HepG2 (cell line): ENCODE measurements at regions of chr5 and their contacts with region 1.

Region 1: DNA sequence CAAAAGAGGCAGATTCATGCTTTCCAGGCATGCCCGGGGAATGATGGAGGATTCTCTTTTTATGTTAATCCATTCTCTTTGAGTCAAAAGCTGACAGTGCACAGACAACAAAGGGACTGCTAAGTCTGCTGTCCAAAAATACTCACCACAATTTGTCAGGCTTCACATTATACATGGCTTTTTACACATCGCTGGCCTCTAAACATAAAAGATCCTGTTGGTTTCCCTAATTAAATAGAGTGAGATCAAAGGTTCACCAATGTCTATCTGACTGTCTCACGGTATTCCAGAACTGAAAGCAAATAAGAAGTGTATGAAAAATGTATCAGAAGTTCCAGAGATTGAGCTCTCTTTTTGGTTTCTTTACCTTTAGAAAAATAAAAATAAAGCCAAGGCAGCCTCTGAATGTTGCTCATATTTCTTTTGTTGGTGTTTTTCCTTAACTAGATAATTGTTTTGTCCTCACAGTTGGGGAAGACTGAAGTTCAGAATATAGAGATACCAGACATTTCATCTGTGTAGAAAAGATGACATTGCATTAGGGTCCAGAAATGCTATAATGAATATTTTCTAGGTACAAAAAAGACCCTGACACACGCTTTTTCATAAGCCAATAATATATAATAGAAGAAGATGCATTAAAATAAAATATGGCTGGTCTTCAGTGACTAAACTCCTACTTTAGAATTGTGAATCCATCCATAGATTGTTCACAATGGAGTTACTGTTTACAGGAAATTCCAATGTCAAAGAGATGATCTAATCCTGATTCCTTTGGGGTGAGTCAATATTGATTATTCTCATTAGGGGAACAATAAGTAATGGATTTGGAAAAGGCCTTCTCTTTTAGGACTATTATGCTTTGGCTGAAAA is 688.2 kb upstream of the CDH6 start:
- DNase-seq: peak; percentile 97
- ATAC-seq: peak; percentile 96
- H3K4me3 ChIP-seq: peak overlapping the region in 2 of 3 experiments; percentile 40 to 53; a peak in 2 of 6 replicates
- H3K27ac ChIP-seq: peak overlapping the region; percentile 100
- H3K4me1 ChIP-seq: peaks cover 66% of the 10 kb centered on the region
- H3K27me3 ChIP-seq: no peaks in the 10 kb centered on the region; a peak in 1 of 5 replicates
- CTCF ChIP-seq: no peak
- EP300 ChIP-seq: peak; percentile 81 to 96; a peak in 3 of 4 replicates
- POLR2A ChIP-seq: peak in 1 of 2 experiments; percentile 46; a peak in 1 of 4 replicates
- RAD21 ChIP-seq: no peak

Region 2: DNA sequence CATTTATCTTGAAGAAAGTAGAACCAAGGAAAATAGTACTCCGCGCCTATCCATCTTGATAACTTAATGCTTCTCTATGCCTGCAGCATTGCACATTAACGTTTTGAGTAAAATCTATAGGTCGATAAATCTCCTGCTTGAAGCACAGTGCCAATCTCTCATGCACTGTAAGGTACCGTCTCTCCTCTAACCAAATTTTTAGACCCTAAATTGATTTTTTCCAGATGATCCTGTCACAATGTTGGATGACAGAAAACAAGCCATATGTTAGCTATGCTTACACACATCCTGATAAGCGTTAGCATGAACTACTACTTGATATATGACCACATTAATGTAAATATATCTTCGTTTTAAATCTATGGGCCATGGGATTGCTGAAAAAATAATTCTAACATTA is 35.6 kb before region 1 on chr5:
- CTCF ChIA-PET with region 1: no interaction called
- POLR2A ChIA-PET with region 1: no interaction called
- in situ Hi-C with region 1: no loop called
- intact Hi-C with region 1: no loop called
- DNase-seq: no peak
- ATAC-seq: no peak
- H3K4me3 ChIP-seq: no peak overlapping the region
- H3K27ac ChIP-seq: no peak overlapping the region
- H3K4me1 ChIP-seq: no peaks in the 10 kb centered on the region
- H3K27me3 ChIP-seq: no peaks in the 10 kb centered on the region
- CTCF ChIP-seq: no peak
- EP300 ChIP-seq: no peak
- POLR2A ChIP-seq: no peak
- RAD21 ChIP-seq: no peak

Region 3: GRCh38 chr5:30607301-30607700 is 102.1 kb after region 1 on chr5:
- CTCF ChIA-PET with region 1: no interaction called
- POLR2A ChIA-PET with region 1: interaction called, 10 read pairs
- in situ Hi-C with region 1: loop called (anchors 10 kb)
- intact Hi-C with region 1: loop called (anchors 1 kb)
- DNase-seq: peak; percentile 45
- ATAC-seq: peak; percentile 17; the same call in 1 of the 3 replicates
- H3K4me3 ChIP-seq: no peak overlapping the region
- H3K27ac ChIP-seq: peak overlapping the region; percentile 62
- H3K4me1 ChIP-seq: peaks cover 60% of the 10 kb centered on the region
- H3K27me3 ChIP-seq: no peaks in the 10 kb centered on the region
- CTCF ChIP-seq: no peak
- EP300 ChIP-seq: peak in 1 of 2 experiments; percentile 41; a peak in 1 of 4 replicates
- POLR2A ChIP-seq: no peak
- RAD21 ChIP-seq: no peak

Region 4: DNA sequence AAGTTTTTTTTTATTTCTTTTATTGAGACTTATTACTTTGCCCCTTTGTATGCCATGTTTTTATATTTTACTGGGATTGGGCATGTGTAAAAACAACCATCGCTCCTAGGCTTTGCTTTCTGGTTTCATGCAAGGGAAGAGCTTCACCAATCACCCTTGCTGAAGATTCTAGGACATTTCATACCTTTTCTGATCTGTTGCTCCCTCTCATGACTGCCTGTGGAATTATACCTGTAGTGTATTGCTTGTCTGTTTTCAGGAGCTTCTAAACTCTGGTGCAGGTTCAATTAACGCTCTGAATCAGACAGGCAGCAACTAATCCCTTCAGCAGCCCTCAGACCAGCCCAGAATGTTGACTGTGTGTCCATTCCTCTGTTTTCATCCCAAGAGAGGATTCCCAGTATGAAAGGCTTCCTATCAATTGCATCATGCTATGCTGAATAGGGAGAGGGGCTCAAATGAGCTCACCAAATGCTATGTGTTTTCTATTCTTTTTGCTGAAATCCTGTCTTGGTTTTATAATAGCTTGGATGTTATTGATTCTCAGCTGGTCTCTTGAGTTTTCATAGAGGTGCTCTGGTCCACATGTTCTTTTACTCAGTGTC is 115.3 kb after region 1 on chr5:
- CTCF ChIA-PET with region 1: no interaction called
- POLR2A ChIA-PET with region 1: no interaction called
- in situ Hi-C with region 1: no loop called
- intact Hi-C with region 1: loop called (anchors 1 kb)
- DNase-seq: peak; percentile 50
- ATAC-seq: peak; percentile 89
- H3K4me3 ChIP-seq: no peak overlapping the region
- H3K27ac ChIP-seq: no peak overlapping the region
- H3K4me1 ChIP-seq: peaks cover 8% of the 10 kb centered on the region; the same call in 1 of the 2 replicates
- H3K27me3 ChIP-seq: no peaks in the 10 kb centered on the region
- CTCF ChIP-seq: peak; percentile 64
- EP300 ChIP-seq: no peak
- POLR2A ChIP-seq: no peak
- RAD21 ChIP-seq: peak; percentile 64

Region 5: DNA sequence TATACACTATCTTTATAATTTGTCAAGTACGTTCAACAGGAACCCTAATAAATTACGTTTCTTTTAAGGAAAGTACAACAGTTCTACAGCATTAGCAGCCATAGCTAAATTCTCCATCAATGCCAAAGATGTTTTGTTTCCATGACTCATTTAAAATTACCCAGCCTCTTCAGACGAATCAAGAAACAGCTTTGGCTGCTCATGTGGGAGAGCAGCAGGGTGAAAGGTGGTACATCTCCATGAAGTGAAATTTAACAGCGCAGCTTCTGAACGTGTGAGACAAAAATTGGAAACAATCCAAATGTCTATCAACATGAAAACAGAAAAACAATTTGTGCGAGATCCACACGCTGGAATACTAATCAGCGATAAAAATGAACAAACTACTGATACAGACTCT is 360.9 kb after region 1 on chr5:
- CTCF ChIA-PET with region 1: no interaction called
- POLR2A ChIA-PET with region 1: no interaction called
- in situ Hi-C with region 1: no loop called
- intact Hi-C with region 1: no loop called
- DNase-seq: no peak
- ATAC-seq: no peak
- H3K4me3 ChIP-seq: no peak overlapping the region
- H3K27ac ChIP-seq: no peak overlapping the region
- H3K4me1 ChIP-seq: no peaks in the 10 kb centered on the region
- H3K27me3 ChIP-seq: no peaks in the 10 kb centered on the region
- CTCF ChIP-seq: no peak
- EP300 ChIP-seq: no peak
- POLR2A ChIP-seq: no peak
- RAD21 ChIP-seq: no peak

Region 6: GRCh38 chr5:31232273-31232888 is 727.1 kb after region 1 on chr5:
- CTCF ChIA-PET with region 1: no interaction called
- POLR2A ChIA-PET with region 1: no interaction called
- in situ Hi-C with region 1: no loop called
- intact Hi-C with region 1: loop called (anchors 1 kb)
- DNase-seq: peak; percentile 48
- ATAC-seq: peak; percentile 94
- H3K4me3 ChIP-seq: no peak overlapping the region
- H3K27ac ChIP-seq: no peak overlapping the region
- H3K4me1 ChIP-seq: no peaks in the 10 kb centered on the region
- H3K27me3 ChIP-seq: no peaks in the 10 kb centered on the region
- CTCF ChIP-seq: peak; percentile 76
- EP300 ChIP-seq: no peak
- POLR2A ChIP-seq: no peak
- RAD21 ChIP-seq: peak; percentile 57; the same call in 1 of the 2 replicates

Region 7: DNA sequence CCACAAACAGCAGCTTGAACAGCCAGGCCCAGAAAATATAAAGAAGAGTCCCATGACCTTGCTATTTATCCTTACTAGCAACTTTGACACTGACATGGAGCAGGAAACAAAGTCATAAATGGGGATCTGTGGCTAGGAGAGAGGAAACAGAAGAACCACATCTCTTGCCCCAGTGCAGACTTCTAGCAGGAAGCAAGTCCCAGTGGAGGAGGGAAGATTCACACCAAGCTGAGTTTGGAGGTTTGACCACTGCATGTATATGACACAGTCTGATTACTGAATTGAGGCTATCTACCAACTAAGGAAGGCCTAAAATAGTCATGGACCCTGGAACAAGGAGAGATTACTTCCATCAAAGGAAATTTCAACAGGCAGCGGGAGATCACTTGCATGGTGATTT is 739.7 kb after region 1 on chr5:
- CTCF ChIA-PET with region 1: no interaction called
- POLR2A ChIA-PET with region 1: no interaction called
- in situ Hi-C with region 1: no loop called
- intact Hi-C with region 1: no loop called
- DNase-seq: no peak
- ATAC-seq: no peak
- H3K4me3 ChIP-seq: no peak overlapping the region
- H3K27ac ChIP-seq: no peak overlapping the region
- H3K4me1 ChIP-seq: no peaks in the 10 kb centered on the region
- H3K27me3 ChIP-seq: no peaks in the 10 kb centered on the region
- CTCF ChIP-seq: no peak
- EP300 ChIP-seq: no peak
- POLR2A ChIP-seq: no peak
- RAD21 ChIP-seq: no peak